Activated CD4-positive, alpha-beta T cell treated with anti-CD3 and anti-CD28 coated beads for 36 hours (primary cell): ENCODE measurements at regions of chr17 and their contacts with region 1.

Region 1: GRCh38 chr17:8222630-8223356 is 12.4 kb upstream of the AURKB start:
- DNase-seq: peak; percentile 94
- ATAC-seq: peak; percentile 35
- H3K4me3 Mint-ChIP-seq: peak overlapping the region; percentile 98
- H3K27ac Mint-ChIP-seq: peak overlapping the region; percentile 98
- H3K4me1 Mint-ChIP-seq: peaks cover 54% of the 10 kb centered on the region
- H3K27me3 Mint-ChIP-seq: no peaks in the 10 kb centered on the region

Region 2: DNA sequence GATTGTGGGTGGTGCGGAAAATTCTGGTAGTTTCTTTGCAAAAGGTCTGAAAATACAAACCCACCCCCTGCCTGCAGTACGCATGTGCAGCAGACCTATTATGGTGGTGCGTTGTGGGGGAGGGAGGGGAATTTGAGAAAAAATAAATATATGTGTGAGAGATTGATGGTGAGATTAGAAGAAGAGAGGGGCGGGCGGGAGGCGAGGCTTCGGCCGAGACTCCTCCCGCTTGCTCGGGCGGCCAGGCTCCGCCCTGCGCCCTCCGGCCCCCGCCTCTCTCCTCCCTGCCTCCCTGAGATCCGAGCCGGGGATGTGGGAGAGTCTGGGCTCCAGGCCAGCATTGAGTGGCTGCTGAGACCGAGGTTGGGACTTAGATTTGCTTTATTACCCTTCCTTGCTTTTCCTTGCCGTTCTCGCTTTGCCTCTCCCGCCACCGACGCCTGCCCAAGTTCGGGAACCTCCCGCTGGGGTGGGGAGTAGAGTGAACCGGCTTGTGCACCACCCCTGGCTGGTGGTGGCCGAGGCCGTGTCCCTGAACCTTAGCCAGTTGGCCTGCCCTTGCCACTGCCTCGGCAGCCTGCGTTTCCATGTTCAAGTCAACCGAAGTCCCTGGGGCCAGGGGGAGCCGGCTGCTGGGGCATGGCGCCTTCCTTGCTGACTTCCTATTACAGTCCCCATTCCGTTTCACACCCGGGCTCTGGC is 335.2 kb before region 1 on chr17:
- CTCF ChIA-PET with region 1: no interaction called
- POLR2A ChIA-PET with region 1: interaction called, 3 read pairs
- intact Hi-C with region 1: loop called in 1 of 2 experiments (anchors 1 kb)
- DNase-seq: peak; percentile 94
- ATAC-seq: peak; percentile 79
- H3K4me3 Mint-ChIP-seq: no peak overlapping the region
- H3K27ac Mint-ChIP-seq: no peak overlapping the region
- H3K4me1 Mint-ChIP-seq: peaks cover 4% of the 10 kb centered on the region
- H3K27me3 Mint-ChIP-seq: no peaks in the 10 kb centered on the region

Region 3: GRCh38 chr17:8138672-8139371 is 84.0 kb before region 1 on chr17:
- CTCF ChIA-PET with region 1: interaction called, 8 read pairs
- POLR2A ChIA-PET with region 1: no interaction called
- intact Hi-C with region 1: loop called (anchors 1 kb)
- DNase-seq: peak; percentile 98
- ATAC-seq: peak; percentile 90
- H3K4me3 Mint-ChIP-seq: no peak overlapping the region
- H3K27ac Mint-ChIP-seq: no peak overlapping the region
- H3K4me1 Mint-ChIP-seq: no peaks in the 10 kb centered on the region
- H3K27me3 Mint-ChIP-seq: no peaks in the 10 kb centered on the region

Region 4: GRCh38 chr17:8173056-8173870 is 49.5 kb before region 1 on chr17:
- CTCF ChIA-PET with region 1: interaction called, 3 read pairs
- POLR2A ChIA-PET with region 1: interaction called, 45 read pairs
- intact Hi-C with region 1: loop called (anchors 1 to 5 kb)
- DNase-seq: peak; percentile 91
- ATAC-seq: peak; percentile 87
- H3K4me3 Mint-ChIP-seq: peak overlapping the region; percentile 78
- H3K27ac Mint-ChIP-seq: peak overlapping the region; percentile 96
- H3K4me1 Mint-ChIP-seq: peaks cover 40% of the 10 kb centered on the region
- H3K27me3 Mint-ChIP-seq: no peaks in the 10 kb centered on the region

Region 5: DNA sequence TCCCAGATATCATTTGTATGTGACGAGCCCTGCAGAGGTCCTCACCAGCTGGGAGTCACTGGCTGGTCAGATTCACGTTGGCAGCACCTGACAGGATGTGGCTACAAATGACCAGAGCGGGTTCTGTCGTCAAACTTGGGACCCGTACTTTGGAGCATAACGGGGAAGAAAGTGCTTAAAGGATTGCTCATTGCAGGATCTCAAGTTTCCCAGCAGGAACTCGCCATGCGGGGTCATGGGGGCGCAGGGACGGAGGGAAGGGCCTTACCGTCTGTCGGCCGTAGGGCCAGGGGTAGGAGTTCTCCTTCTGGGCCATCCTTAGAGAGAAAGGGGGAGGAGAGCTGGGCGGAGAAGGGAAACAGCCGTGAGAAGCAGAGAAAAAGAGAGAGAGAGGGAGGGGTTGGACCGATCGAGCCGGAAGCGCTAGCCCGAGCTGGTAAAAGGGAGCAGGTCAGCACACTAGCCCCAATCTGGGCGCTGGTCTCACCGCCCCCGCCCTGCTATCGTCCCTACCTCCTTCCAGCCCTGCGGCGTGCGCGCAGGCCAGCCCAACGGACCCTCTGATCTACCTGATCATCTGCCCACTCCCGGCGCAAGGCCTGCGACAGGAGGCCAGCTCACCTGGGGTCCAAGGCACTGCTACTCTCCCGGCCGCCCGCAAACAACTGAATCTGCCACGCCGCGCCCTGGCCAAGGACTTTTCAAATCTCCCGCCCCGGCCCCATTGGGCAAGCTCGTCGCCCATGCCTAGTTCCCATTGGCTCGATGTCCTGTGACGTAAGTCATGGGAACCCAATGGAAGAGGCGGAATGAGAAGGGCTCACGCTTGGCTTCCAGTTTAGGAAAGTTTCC is 12.7 kb before region 1 on chr17 and contains the start of gene AURKB:
- CTCF ChIA-PET with region 1: interaction called, 28 read pairs
- POLR2A ChIA-PET with region 1: interaction called, 26 read pairs
- intact Hi-C with region 1: loop called (anchors 1 kb)
- DNase-seq: peak; percentile 96
- ATAC-seq: peak; percentile 98
- H3K4me3 Mint-ChIP-seq: peak within 1 kb of the TSS; percentile 99
- H3K27ac Mint-ChIP-seq: peak within 1 kb of the TSS; percentile 97
- H3K4me1 Mint-ChIP-seq: peaks cover 20% of the 10 kb centered on the region
- H3K27me3 Mint-ChIP-seq: no peaks in the 10 kb centered on the region
- total RNA-seq, gene AURKB: 173 to 226 TPM

Region 6: GRCh38 chr17:8288336-8289102 is 65.7 kb after region 1 on chr17 and contains the start of gene RANGRF:
- CTCF ChIA-PET with region 1: interaction called, 3 read pairs
- POLR2A ChIA-PET with region 1: interaction called, 4 read pairs
- intact Hi-C with region 1: loop called in 1 of 2 experiments (anchors 2 kb)
- DNase-seq: peak; percentile 91
- ATAC-seq: peak; percentile 94
- H3K4me3 Mint-ChIP-seq: peak within 1 kb of the TSS; percentile 84
- H3K27ac Mint-ChIP-seq: peak within 1 kb of the TSS; percentile 93
- H3K4me1 Mint-ChIP-seq: peaks cover 20% of the 10 kb centered on the region
- H3K27me3 Mint-ChIP-seq: no peaks in the 10 kb centered on the region
- total RNA-seq, gene RANGRF: 37.9 to 40.1 TPM

Region 7: DNA sequence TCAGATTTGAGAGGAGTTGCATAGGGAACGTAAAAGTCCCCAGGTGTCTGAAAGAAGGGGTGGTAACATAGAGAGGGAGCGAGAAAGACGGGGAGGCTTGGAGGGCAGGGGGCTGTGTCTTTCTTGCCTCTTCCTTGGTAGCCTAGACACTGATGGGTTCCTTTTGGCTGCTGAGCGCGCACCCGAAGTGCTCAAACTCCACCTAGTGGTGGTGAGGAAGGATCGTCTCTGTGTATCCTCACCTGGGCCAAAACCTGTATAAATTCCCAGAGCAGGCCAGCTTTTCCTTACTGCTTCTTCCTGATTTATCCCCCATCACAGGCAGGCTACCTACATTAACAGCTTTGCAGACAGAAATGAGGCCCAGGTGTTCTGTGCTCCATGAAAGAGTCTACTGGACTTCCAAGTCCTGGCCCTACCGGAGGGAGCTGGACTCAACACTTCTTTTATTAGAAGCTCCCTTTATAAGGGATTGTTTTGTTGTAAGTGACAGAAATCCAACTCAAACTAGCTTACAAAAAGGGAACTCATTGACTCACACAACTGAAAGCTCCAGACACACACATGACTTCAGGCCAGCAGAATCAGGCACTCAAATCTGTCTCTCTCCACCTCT is 77.9 kb after region 1 on chr17:
- CTCF ChIA-PET with region 1: interaction called, 8 read pairs
- POLR2A ChIA-PET with region 1: interaction called, 4 read pairs
- intact Hi-C with region 1: loop called (anchors 1 kb)
- DNase-seq: peak; percentile 76
- ATAC-seq: peak; percentile 97
- H3K4me3 Mint-ChIP-seq: peak overlapping the region; percentile 16
- H3K27ac Mint-ChIP-seq: peak overlapping the region; percentile 6
- H3K4me1 Mint-ChIP-seq: peaks cover 8% of the 10 kb centered on the region
- H3K27me3 Mint-ChIP-seq: no peaks in the 10 kb centered on the region